Activated CD8-positive, alpha-beta memory T cell treated with anti-CD3 and anti-CD28 coated beads, Interleukin-2, amount 10 ng/mL, durations not matched to agents 7 days and 5 days (primary cell): ENCODE measurements at regions of chr9 and their contacts with region 1.

Region 1: DNA sequence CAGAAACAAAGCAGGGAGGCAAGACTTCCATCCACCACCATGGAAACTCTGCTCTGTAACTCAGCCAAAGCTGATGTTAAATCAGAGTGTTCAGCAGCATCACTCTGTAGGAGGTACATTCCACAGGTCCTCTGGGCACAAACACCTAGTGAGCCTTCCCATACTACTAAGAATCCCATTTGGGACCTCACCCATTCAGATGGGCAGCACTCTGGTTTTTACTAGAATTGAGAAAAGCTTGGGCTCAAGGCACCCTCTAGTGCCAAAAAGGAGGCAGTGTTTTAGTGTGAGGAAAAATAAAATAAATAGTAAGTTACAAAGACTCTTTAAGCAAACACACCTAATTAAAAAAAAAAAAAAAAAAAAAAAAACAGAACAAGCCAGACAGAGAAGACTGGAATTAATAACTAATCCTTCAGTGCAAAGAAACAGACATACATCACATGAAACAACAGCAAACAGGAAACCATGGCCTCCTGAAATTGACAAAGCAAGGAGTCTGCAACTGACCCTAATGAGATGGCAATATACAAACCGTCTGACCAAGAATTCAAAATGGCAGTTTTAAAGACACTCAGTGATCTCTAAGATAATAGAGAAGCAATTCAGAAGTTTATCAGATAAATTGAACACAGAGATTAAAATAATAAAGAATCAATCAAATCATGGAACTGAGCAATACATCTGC is 159.5 kb downstream of the GNA14 start:
- DNase-seq: no peak
- ATAC-seq: peak; percentile 73
- H3K4me3 Mint-ChIP-seq: peak overlapping the region; percentile 73
- H3K27ac Mint-ChIP-seq: peak overlapping the region; percentile 29
- H3K4me1 Mint-ChIP-seq: peaks cover 27% of the 10 kb centered on the region
- H3K27me3 Mint-ChIP-seq: peaks cover 6% of the 10 kb centered on the region

Region 2: DNA sequence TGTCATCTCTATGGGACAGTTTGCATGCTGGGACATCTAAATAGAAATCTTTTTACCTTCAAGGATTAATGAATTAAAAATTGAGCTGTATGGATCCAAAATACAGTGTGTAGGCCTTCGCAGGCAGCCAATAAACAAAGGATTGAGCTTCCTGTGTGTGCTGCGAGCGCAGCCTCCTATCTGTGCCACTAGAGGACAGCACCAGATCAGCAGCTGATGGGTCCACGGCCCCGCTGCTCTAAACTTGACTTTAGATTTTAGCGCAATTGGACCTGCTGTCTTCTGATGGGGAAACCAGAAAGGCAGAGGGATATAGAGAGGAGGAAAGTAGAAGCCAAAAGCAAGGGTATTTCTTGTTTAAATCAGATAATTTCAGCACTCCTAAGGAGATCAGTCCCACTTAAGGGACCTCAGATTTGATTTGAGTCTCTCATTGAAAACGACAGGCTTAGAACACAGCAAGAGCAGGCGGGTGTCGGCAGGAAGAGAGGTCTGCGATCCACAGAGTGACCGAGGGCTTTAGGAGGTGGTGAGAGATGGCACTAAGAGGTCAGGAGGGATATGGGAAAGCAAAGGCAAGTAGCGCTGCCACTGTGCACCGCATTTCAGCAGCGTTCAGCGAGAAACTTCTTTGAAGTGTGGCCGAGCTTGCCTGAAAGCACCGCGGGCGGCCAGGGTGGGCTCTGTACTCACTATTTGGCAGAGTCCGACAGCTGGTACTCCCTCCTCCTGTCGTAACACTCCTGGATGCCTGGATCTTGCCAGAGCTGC is 54.7 kb before region 1 on chr9:
- CTCF ChIA-PET with region 1: interaction called, 42 read pairs
- DNase-seq: peak; percentile 65
- ATAC-seq: peak; percentile 91
- H3K4me3 Mint-ChIP-seq: no peak overlapping the region
- H3K27ac Mint-ChIP-seq: no peak overlapping the region
- H3K4me1 Mint-ChIP-seq: peaks cover 4% of the 10 kb centered on the region
- H3K27me3 Mint-ChIP-seq: peaks cover 6% of the 10 kb centered on the region

Region 3: DNA sequence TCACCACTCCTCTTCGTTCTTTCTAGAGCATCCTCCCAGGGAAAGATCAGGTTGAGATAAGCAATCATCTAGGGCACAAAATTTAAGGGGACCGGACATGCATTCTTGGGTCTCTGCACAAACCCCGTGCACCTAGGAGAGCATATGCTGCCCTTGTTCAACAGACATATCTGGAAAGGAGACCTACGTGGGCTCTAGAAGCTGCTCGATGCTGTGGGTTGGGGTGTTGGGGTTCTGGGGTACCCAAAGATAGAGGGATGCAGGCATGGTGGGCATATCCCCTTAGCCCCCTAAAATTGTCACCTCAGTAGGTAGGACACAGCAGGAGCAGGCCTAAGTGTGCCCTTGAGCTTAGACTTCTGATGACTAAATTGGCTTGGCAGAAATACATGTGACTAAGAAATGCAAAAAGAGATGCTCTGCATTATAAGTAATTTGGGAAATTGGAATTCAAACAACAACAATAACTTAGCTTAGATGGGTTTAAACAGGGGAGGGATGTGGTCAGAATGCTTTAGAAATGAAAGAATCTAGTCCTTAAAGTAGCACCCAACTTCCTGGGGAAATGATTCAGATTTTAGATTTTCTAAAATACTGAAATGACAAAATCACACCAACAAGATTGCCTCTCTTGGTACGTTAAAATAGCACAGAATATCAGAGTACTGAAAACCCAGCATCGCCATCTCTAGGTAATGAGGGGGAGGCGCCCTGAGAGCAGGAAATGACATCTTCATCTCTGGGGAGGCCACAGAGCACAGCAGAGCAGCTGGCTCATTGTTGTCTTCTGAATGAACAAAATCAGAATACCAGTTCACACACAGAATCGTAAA is 12.7 kb before region 1 on chr9:
- CTCF ChIA-PET with region 1: interaction called, 11 read pairs
- DNase-seq: peak; percentile 86
- ATAC-seq: peak; percentile 100
- H3K4me3 Mint-ChIP-seq: peak overlapping the region; percentile 39
- H3K27ac Mint-ChIP-seq: peak overlapping the region; percentile 99
- H3K4me1 Mint-ChIP-seq: peaks cover 37% of the 10 kb centered on the region
- H3K27me3 Mint-ChIP-seq: no peaks in the 10 kb centered on the region